Activated T-helper 1 cell treated with anti-CD3 and anti-CD28 coated beads, Interleukin-12 subunit alpha, Interleukin-12 subunit beta, Interleukin-2, Interleukin-4 antibody, amounts not matched to agents 30 ng/mL and 10 ng/mL and 1 ng/mL, durations not matched to agents 14 hours and 24 hours and 36 hours (primary cell): ENCODE measurements at regions of chr19 and their contacts with region 1.

Region 1: GRCh38 chr19:17511724-17512573 is 500 bp downstream of the PGLS start:
- DNase-seq: peak; percentile 75
- H3K4me3 Mint-ChIP-seq: peak overlapping the region; percentile 99
- H3K27ac Mint-ChIP-seq: peak overlapping the region; percentile 79
- H3K4me1 Mint-ChIP-seq: peaks cover 28% of the 10 kb centered on the region
- H3K27me3 Mint-ChIP-seq: no peaks in the 10 kb centered on the region

Region 2: GRCh38 chr19:17336872-17337722 is 174.9 kb before region 1 on chr19 and contains the start of gene GTPBP3:
- intact Hi-C with region 1: loop called (anchors 1 kb)
- DNase-seq: peak; percentile 95
- H3K4me3 Mint-ChIP-seq: peak within 1 kb of the TSS; percentile 87
- H3K27ac Mint-ChIP-seq: peak within 1 kb of the TSS; percentile 88
- H3K4me1 Mint-ChIP-seq: peaks cover 21% of the 10 kb centered on the region
- H3K27me3 Mint-ChIP-seq: peaks cover 2% of the 10 kb centered on the region
- total RNA-seq, gene GTPBP3: 64.2 and 72.0 TPM in 2 replicates

Region 3: DNA sequence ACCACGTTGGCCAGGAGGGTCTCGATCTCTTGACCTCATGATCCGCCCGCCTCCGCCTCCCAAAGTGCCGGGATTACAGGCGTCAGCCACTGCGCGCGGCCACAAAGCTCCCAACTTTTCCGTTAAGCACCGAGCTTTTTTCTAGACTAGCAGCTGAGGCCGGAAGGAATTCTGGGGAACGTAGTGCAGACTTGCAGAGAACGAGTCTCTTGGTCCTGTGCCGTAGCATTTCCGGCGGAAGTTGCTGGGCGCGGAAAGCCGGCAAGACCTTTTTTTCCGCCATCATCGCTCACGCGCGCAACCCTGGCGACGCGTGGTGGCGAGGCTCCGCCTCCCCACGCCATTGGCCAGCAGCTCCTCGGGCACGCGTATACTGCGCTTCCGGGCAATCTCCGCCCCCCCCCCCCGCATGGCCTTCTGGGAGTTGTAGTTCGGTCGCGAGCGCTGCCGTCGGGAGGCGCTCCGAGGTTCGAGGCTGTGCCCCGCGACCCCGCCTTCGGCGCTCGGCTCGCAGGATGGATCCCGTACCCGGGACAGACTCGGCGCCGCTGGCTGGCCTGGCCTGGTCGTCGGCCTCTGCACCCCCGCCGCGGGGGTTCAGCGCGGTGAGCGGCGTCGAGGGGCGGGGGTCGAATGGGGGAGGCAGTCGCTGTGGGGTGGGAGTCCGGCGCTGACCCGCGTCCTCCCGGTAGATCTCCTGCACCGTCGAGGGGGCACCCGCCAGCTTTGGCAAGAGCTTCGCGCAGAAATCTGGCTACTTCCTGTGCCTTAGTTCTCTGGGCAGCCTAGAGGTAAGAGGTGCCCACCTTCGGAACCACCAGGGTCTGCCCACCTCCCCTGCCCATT is 92.1 kb before region 1 on chr19 and contains the start of gene MVB12A:
- intact Hi-C with region 1: no loop called
- DNase-seq: peak; percentile 95
- H3K4me3 Mint-ChIP-seq: peak within 1 kb of the TSS; percentile 94
- H3K27ac Mint-ChIP-seq: peak within 1 kb of the TSS; percentile 94
- H3K4me1 Mint-ChIP-seq: peaks cover 17% of the 10 kb centered on the region
- H3K27me3 Mint-ChIP-seq: no peaks in the 10 kb centered on the region
- total RNA-seq, gene MVB12A: 40.8 and 42.7 TPM in 2 replicates

Region 4: DNA sequence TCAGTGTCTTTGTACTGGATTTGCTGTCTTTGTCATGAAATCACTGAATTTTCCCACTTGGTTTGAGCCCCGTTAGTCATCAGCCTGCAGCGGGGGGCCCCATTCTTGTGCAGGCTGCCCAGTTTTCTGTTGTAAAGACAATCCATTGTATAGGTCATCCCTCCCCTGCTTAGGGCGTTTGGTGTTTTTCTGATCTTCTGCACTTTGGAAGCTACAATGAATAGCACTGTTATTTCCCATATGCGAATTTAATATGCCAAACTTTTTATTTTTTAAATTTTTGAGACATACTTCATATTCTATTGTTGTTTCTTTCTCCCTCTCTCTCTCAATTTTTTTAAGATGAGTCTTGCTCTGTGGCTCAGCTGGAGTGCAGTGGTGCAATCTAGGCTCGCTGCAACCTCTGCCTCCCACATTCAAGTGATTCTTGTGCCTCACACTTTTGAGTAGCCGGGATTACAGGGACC is 32.6 kb before region 1 on chr19:
- intact Hi-C with region 1: no loop called
- DNase-seq: no peak
- H3K4me3 Mint-ChIP-seq: no peak overlapping the region
- H3K27ac Mint-ChIP-seq: no peak overlapping the region
- H3K4me1 Mint-ChIP-seq: no peaks in the 10 kb centered on the region
- H3K27me3 Mint-ChIP-seq: peaks cover 6% of the 10 kb centered on the region

Region 5: DNA sequence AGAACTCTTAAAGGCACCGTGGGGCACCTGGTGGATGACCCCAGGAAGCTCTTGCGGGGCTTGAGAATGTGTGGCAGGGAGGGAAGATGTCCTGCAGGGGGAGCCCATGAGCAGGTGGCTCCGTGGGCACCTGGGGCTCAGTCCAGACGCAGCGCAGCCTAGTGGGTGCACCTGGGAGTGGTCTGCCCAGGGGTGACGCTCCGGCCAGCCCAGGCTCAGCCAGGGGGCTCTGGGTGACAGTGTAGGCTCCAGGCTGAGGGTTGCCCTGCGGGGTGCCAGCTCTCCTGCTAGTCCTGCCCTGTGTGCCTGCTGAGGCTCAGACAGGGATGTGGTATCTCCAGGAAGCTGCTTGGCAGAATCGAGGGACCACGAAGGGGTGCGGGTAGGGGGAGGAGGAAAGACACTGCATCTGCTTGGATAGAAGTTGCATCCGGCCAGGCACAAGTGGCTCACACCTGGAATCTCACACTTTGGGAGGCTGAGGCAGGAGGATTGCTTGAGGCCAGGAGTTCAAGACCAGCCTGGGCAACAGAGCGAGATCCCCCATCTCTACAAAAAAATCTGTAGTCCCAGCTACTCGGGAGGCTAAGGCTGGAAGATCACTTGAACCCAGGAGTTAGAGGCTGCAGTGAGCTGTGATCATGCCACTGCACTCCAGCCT is 15.5 kb before region 1 on chr19:
- intact Hi-C with region 1: loop called (anchors 1 kb)
- DNase-seq: peak; percentile 74
- H3K4me3 Mint-ChIP-seq: no peak overlapping the region
- H3K27ac Mint-ChIP-seq: no peak overlapping the region
- H3K4me1 Mint-ChIP-seq: peaks cover 13% of the 10 kb centered on the region
- H3K27me3 Mint-ChIP-seq: no peaks in the 10 kb centered on the region

Region 6: GRCh38 chr19:17555480-17555928 is 43.6 kb after region 1 on chr19 and contains the start of gene COLGALT1:
- intact Hi-C with region 1: loop called (anchors 1 kb)
- DNase-seq: peak; percentile 97
- H3K4me3 Mint-ChIP-seq: peak within 1 kb of the TSS; percentile 86
- H3K27ac Mint-ChIP-seq: peak within 1 kb of the TSS; percentile 70
- H3K4me1 Mint-ChIP-seq: peaks cover 15% of the 10 kb centered on the region
- H3K27me3 Mint-ChIP-seq: no peaks in the 10 kb centered on the region
- total RNA-seq, gene COLGALT1: 115 and 117 TPM in 2 replicates